ENCODE measurements at regions of chr4 and their contacts with region 1.

Region 1: DNA sequence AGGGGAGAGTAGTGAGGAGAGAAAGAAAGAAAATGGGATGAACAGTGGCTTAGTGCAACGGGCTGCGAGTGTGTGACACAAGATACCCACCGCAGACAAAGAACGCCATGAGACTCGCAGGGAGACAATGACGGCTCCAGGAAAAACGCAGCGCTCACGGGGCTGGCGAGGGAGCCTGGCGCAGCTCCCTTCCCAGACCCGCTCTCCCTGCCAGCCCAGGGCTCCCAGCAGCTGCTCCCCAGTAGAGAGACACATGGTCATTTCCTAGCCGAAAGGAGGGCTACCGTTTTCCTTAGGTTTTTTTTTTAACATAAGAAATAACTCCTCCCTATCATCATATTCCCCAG is 149.5 kb downstream of the MAML3 start:
- DNase-seq: peak; percentile 65
- H3K4me3 ChIP-seq: peak overlapping the region; percentile 21 to 26
- H3K27ac ChIP-seq: peak overlapping the region; percentile 58 to 66
- H3K4me1 ChIP-seq: no peaks in the 10 kb centered on the region
- H3K27me3 ChIP-seq: no peaks in the 10 kb centered on the region
- CTCF ChIP-seq: no peak
- POLR2A ChIP-seq: no peak

Region 2: DNA sequence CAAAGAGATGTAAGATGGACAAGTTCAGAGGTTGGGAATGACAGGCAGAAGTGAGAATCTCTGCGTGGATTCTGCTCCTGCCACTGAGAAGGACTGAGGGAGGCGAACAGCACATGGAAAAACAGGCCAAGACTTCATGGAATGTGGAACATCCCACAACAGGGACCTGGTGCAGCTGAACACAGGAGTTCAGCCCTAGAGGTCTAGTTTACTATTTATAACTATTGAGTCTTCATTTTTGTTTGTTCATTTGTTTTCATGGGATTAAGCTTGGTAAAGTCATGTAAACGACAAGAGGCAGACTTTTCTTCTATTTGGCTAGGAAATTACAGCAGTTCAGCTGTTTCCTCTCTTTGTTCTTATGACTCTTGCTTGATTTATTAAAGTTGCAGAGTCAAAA is 85.0 kb before region 1 on chr4:
- intact Hi-C with region 1: loop called (anchors 5 kb)
- DNase-seq: no peak
- H3K4me3 ChIP-seq: no peak overlapping the region
- H3K27ac ChIP-seq: peak overlapping the region; percentile 53 to 72
- H3K4me1 ChIP-seq: peaks cover 33% of the 10 kb centered on the region
- H3K27me3 ChIP-seq: no peaks in the 10 kb centered on the region
- CTCF ChIP-seq: no peak
- POLR2A ChIP-seq: no peak

Region 3: GRCh38 chr4:140135529-140136088 is 131.1 kb after region 1 on chr4:
- intact Hi-C with region 1: no loop called
- DNase-seq: no peak
- H3K4me3 ChIP-seq: no peak overlapping the region
- H3K27ac ChIP-seq: no peak overlapping the region
- H3K4me1 ChIP-seq: peaks cover 11% of the 10 kb centered on the region
- H3K27me3 ChIP-seq: no peaks in the 10 kb centered on the region
- CTCF ChIP-seq: no peak
- POLR2A ChIP-seq: no peak

Region 4: GRCh38 chr4:140326395-140326993 is 322.0 kb after region 1 on chr4:
- intact Hi-C with region 1: loop called (anchors 10 kb)
- DNase-seq: no peak
- H3K4me3 ChIP-seq: no peak overlapping the region
- H3K27ac ChIP-seq: no peak overlapping the region
- H3K4me1 ChIP-seq: no peaks in the 10 kb centered on the region
- H3K27me3 ChIP-seq: no peaks in the 10 kb centered on the region
- CTCF ChIP-seq: peak; percentile 24 to 78 (median 60)
- POLR2A ChIP-seq: no peak